Right ventricle myocardium inferior (tissue), 1 donor: ENCODE measurements at regions of chr15 and their contacts with region 1.

Region 1: GRCh38 chr15:80567721-80568157 is 127.4 kb upstream of the ABHD17C start:
- DNase-seq: no peak
- ATAC-seq: peak; percentile 79

Region 2: DNA sequence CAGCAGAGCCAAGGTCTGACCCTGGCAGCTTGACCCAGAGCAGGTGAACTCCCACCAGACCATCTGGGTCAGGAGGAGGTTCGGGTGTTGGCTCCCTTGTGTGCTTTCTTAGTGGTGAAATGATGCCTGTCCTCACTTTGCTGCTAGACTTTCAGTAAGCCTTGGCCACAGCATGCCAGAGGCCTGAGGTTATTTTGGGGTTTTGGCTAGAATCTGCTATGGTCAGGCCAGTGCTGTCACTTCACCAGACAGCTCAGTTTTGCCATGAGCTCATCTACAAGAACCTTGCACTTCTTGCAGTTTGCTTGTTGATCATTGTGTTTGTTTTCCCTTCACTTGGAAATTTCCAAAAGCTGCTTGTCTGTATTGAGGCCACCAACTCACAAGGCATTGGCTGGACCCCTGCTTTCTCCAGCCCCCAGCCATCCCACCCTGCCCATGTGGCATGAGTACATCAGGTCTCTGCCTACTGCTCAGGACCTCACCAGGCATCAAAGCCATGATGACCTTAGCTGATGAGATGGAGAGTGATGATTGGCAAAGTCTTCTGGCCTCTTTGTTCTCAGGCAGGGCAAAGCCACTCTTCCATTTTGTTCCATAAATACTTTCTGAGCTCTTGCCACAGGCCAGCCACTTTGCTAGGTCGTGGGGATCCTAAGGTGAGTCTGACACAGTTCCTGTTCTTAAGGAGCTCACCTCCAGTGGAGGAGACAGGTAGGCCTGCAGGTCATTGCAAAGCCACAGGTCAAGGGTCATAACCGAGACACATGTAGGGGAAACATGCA is 41.0 kb before region 1 on chr15:
- intact Hi-C with region 1: no loop called
- DNase-seq: no peak
- ATAC-seq: peak; percentile 75

Region 3: GRCh38 chr15:80599359-80599758 is 31.6 kb after region 1 on chr15:
- intact Hi-C with region 1: no loop called
- DNase-seq: no peak
- ATAC-seq: no peak

Region 4: DNA sequence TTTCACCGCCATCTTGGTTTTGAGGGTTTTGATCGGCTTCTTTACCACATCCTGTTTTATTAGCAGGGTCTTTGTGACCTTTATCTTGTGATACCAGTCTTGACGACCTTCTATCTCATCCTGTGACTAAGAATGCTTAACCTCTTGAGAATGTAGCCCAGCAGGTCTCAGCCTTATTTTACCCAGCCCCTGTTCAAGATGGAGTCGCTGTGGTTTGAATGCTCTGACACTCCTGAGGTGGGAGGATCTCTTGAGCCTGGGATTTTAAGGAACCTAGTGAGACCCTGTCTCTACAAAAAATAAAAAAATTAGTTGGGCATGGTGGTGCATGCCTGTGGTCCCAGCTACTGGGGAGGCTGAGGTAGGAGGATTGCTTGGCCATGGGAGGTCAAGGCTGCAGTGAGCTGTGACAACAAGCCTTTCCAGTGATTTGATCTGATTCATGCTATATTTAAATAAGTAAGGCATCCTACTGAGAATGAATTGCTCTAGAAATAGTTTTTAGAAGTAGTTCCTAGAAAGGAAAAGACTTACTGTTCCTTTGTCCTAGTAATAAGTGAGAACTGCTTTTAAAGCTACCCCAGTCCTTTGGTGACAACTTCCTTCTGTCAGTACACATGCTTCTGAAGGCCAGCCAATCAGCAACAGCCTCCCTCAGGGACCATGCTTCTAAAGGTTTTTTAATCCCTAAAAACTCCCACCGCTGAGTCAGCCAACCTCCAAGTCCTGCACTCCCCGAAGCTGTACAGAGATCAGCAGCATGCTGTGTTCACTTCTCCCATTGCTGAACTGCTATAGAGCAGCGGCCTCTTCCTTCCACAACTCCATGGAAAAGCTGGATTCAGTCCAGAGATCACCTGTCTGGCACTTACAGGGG is 202.3 kb after region 1 on chr15:
- intact Hi-C with region 1: no loop called
- DNase-seq: no peak
- ATAC-seq: no peak

Region 5: GRCh38 chr15:80970018-80970658 is 402.4 kb after region 1 on chr15:
- intact Hi-C with region 1: loop called (anchors 2 kb)
- DNase-seq: no peak
- ATAC-seq: peak; percentile 63